ENCODE measurements at regions of chr16 and their contacts with region 1.

Region 1: DNA sequence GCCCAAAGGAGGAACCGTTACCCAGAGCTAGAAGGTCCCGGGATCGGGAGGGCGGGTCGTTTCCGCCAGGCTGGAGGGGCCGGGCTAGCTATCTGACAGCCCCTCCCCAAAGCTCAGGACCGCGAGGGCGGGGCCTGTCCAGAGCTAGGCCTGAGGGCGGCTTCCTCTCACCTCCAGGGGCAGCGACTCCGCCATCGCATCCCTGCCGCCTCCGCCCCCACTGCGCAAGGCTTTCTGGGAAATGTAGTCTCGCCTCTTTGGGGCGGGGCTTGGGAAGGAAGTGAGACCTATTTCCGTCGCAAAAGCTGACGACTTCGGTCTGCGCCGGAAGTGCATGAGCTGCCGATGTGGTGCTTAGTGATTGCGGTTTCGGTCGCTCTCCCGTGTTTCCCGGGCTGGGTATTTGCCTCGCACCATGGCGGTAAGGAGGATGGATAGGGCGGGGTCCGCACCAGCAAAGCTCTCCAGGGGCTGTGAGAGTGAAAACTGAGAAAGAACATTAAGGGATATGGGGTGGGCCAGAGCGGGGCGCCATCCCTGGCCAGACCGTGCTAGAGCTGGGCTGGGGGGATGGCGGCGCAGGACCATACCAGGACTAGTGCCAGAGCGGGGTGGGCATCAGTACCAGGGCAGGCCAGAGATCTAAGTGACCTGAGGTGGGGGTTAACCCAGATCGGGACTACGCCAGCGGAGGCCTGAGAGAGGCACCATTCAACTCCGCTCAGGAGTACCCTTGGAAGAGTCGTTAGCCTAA is at the start of gene TMEM208:
- DNase-seq: peak; percentile 99
- ATAC-seq: peak; percentile 97
- H3K4me3 Mint-ChIP-seq: peak within 1 kb of the TSS; percentile 98
- H3K27ac Mint-ChIP-seq: peak within 1 kb of the TSS; percentile 98
- H3K4me1 Mint-ChIP-seq: peaks cover 42% of the 10 kb centered on the region
- H3K27me3 Mint-ChIP-seq: no peaks in the 10 kb centered on the region
- total RNA-seq, gene TMEM208: 13.6 to 31.2 TPM

Region 2: DNA sequence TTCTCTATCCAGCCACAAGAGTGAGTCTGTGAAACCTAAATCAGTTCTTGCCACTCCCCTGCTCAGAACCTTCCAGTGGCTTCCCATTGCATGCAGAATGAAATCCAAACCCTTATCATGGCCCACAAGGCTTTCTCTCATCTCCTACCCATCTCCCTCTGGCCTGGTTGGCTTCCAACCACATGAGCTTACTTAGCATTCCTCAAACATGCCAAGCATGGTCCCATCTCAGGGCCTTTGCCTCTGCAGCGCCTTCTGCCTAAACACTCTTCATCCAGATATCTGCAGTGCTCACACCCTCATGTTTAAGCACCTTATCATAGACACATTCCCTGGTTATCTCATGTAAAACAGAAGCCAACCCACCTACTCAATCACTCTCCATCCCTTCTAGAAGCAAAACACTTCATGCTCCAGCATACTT is 692.6 kb before region 1 on chr16:
- CTCF ChIA-PET with region 1: no interaction called
- POLR2A ChIA-PET with region 1: no interaction called
- intact Hi-C with region 1: no loop called
- DNase-seq: no peak
- ATAC-seq: no peak
- H3K4me3 Mint-ChIP-seq: no peak overlapping the region
- H3K27ac Mint-ChIP-seq: no peak overlapping the region
- H3K4me1 Mint-ChIP-seq: peaks cover 9% of the 10 kb centered on the region
- H3K27me3 Mint-ChIP-seq: no peaks in the 10 kb centered on the region

Region 3: DNA sequence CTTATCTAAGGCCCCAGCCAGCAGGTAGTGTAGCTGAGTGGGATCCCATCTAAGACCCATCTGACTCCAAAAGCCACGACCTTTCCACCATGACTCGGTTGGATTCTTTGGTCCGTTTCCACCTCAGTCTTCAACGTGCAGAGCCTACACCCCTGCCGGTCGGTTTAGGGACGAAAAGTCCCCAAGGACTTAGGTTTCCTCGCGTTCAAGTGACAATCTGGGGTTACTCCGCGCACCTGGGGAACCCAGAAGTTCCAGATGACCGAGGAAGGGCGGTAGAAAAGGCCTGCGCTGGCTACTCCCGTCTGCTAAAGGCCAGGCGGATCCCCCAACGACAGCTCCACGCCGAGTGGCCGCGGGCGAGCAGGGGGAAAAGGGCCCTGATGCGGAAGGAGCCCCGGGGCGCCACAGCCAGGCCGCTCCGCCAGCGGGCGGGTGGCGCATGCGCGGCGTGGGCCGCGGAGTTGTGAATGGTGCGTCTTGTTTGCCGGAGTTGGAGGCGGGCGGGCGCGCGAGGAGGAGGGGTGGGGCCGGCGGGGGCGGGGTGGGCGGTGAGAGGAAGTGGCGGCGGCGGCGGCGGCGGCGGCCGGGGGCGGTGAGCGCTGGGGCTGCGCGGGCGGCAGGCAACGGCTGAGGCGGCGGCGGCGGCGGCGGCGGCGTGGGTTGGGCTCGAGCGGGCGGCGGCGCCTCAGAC is 198.3 kb before region 1 on chr16 and contains the start of gene CBFB:
- CTCF ChIA-PET with region 1: no interaction called
- POLR2A ChIA-PET with region 1: no interaction called
- intact Hi-C with region 1: loop called in 1 of 2 experiments (anchors 1 kb)
- DNase-seq: peak; percentile 95
- ATAC-seq: peak; percentile 90
- H3K4me3 Mint-ChIP-seq: peak within 1 kb of the TSS; percentile 87
- H3K27ac Mint-ChIP-seq: peak within 1 kb of the TSS; percentile 90
- H3K4me1 Mint-ChIP-seq: peaks cover 34% of the 10 kb centered on the region
- H3K27me3 Mint-ChIP-seq: no peaks in the 10 kb centered on the region
- total RNA-seq, gene CBFB: 84.6 to 90.2 TPM

Region 4: DNA sequence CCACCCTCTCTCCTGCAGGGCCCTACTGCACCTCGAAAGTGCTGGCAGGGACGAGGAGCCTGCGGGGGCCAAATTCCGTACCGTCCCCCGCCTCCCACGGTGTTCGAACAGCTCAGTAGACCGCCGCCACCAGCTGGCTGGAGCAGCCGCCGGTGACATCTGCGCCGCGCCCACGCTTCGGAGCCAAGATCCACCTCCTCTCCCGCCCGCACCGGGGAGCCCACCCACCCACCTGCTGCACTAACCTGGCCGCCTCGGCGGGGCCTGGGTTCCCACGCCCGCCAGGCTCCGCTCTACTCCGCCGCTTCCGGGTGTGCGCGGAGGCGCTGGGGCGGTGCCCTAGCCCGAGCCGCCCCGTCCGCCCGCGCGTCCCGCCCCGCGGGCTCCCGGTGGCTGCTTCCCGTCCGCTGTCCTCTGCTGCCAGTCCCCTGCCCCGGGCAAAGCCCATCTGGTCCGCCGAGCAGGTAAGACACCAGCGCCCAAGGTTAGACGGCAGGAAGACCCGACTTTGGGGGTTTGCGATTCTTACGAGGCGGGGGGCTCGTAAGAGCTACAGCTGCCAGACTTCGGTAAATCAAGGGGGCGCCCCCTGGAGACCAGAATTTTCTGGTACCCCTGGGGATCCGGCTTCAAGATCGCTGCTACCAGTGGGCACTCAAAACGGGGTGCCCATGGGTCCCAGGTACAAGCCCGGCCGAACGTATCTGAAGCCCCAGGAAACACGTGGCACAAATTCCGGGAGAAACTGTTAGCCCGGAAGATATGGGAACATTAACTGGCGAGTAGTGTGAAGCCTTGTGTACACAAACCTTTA is 67.2 kb before region 1 on chr16 and contains the starts of genes FBXL8 and TRADD:
- CTCF ChIA-PET with region 1: interaction called, 4 read pairs
- POLR2A ChIA-PET with region 1: no interaction called
- intact Hi-C with region 1: loop called in 1 of 2 experiments (anchors 1 kb)
- DNase-seq: peak; percentile 88
- ATAC-seq: peak; percentile 63
- H3K4me3 Mint-ChIP-seq: peak within 1 kb of the TSS; percentile 91
- H3K27ac Mint-ChIP-seq: peak within 1 kb of the TSS; percentile 93
- H3K4me1 Mint-ChIP-seq: peaks cover 48% of the 10 kb centered on the region
- H3K27me3 Mint-ChIP-seq: peaks cover 12% of the 10 kb centered on the region
- total RNA-seq, gene FBXL8: 15.5 to 21.0 TPM
- total RNA-seq, gene TRADD: 22.0 to 34.0 TPM

Region 5: DNA sequence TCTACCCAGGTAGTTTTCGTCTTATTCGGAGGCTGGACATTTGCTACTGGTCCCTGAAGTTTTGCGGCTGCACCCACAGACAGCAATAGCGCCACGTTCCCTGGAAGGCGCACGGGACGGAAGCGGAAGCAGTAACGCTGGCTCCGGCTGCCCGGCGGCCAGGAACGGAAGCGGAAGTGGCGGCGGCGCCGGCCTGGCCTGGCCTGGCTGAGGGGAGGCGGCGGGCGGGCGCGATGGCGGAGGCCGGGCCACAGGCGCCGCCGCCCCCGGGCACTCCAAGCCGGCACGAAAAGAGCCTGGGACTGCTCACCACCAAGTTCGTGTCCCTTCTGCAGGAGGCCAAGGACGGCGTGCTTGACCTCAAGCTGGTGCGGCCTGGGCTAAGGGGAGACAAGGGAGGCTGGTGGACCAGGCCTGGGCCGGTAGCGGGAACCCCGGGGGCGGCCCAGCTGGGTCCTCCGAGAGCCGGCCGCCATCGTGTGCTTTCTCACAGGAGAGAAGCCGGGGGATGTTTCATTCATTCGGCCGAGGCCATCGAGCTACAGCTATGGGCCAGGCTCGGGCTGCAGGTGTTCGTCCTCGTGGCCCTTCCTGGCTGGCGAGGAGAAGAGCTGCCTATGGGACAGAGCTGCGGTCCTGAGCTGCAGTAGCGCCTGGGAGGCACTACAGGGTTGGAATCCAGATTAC is 34.8 kb before region 1 on chr16 and contains the start of gene E2F4:
- CTCF ChIA-PET with region 1: no interaction called
- POLR2A ChIA-PET with region 1: no interaction called
- intact Hi-C with region 1: loop called (anchors 1 to 5 kb)
- DNase-seq: peak; percentile 92
- ATAC-seq: peak; percentile 96
- H3K4me3 Mint-ChIP-seq: peak within 1 kb of the TSS; percentile 93
- H3K27ac Mint-ChIP-seq: peak within 1 kb of the TSS; percentile 93
- H3K4me1 Mint-ChIP-seq: peaks cover 32% of the 10 kb centered on the region
- H3K27me3 Mint-ChIP-seq: no peaks in the 10 kb centered on the region
- total RNA-seq, gene E2F4: 91.4 to 110 TPM

Region 6: GRCh38 chr16:67279296-67280089 is 52.5 kb after region 1 on chr16 and contains the start of gene PLEKHG4:
- CTCF ChIA-PET with region 1: no interaction called
- POLR2A ChIA-PET with region 1: no interaction called
- intact Hi-C with region 1: loop called in 1 of 2 experiments (anchors 1 kb)
- DNase-seq: peak; percentile 92
- ATAC-seq: peak; percentile 93
- H3K4me3 Mint-ChIP-seq: peak within 1 kb of the TSS; percentile 85
- H3K27ac Mint-ChIP-seq: peak within 1 kb of the TSS; percentile 90
- H3K4me1 Mint-ChIP-seq: peaks cover 19% of the 10 kb centered on the region
- H3K27me3 Mint-ChIP-seq: no peaks in the 10 kb centered on the region
- total RNA-seq, gene PLEKHG4: 21.1 to 23.1 TPM

Region 7: GRCh38 chr16:67833418-67834241 is 606.6 kb after region 1 on chr16:
- CTCF ChIA-PET with region 1: no interaction called
- POLR2A ChIA-PET with region 1: no interaction called
- intact Hi-C with region 1: loop called in 1 of 2 experiments (anchors 2 kb)
- DNase-seq: peak; percentile 97
- ATAC-seq: peak; percentile 100
- H3K4me3 Mint-ChIP-seq: peak overlapping the region; percentile 87
- H3K27ac Mint-ChIP-seq: peak overlapping the region; percentile 78
- H3K4me1 Mint-ChIP-seq: peaks cover 9% of the 10 kb centered on the region
- H3K27me3 Mint-ChIP-seq: no peaks in the 10 kb centered on the region

Region 8: GRCh38 chr16:67872786-67873537 is 646.0 kb after region 1 on chr16 and contains the start of gene EDC4:
- CTCF ChIA-PET with region 1: no interaction called
- POLR2A ChIA-PET with region 1: no interaction called
- intact Hi-C with region 1: loop called in 1 of 2 experiments (anchors 1 kb)
- DNase-seq: peak; percentile 92
- ATAC-seq: peak; percentile 89
- H3K4me3 Mint-ChIP-seq: peak within 1 kb of the TSS; percentile 77
- H3K27ac Mint-ChIP-seq: peak within 1 kb of the TSS; percentile 92
- H3K4me1 Mint-ChIP-seq: peaks cover 30% of the 10 kb centered on the region
- H3K27me3 Mint-ChIP-seq: no peaks in the 10 kb centered on the region
- total RNA-seq, gene EDC4: 92.8 to 96.9 TPM

Measured in activated CD4-positive, alpha-beta T cell treated with anti-CD3 and anti-CD28 coated beads for 36 hours (primary cell).